ENCODE measurements at regions of chr10 and their contacts with region 1.

Region 1: GRCh38 chr10:72009411-72010081 is 45.4 kb downstream of the CHST3 start:
- DNase-seq: peak; percentile 93 to 96
- ATAC-seq: peak; percentile 84 to 91 (median 88)
- H3K4me3 ChIP-seq: peak overlapping the region; percentile 3
- H3K27ac ChIP-seq: peak overlapping the region; percentile 93
- H3K4me1 ChIP-seq: peaks cover 52% of the 10 kb centered on the region
- H3K27me3 ChIP-seq: no peaks in the 10 kb centered on the region
- CTCF ChIP-seq: no peak

Region 2: GRCh38 chr10:71963756-71964668 is 45.5 kb before region 1 on chr10 and contains the start of gene CHST3:
- intact Hi-C with region 1: loop called in 1 of 2 experiments (anchors 2 kb)
- DNase-seq: peak; percentile 79 to 92
- ATAC-seq: peak; percentile 69 to 76 (median 72)
- H3K4me3 ChIP-seq: peak within 1 kb of the TSS; percentile 84
- H3K27ac ChIP-seq: peak within 1 kb of the TSS; percentile 99
- H3K4me1 ChIP-seq: peaks cover 21% of the 10 kb centered on the region
- H3K27me3 ChIP-seq: no peaks in the 10 kb centered on the region
- CTCF ChIP-seq: no peak
- total RNA-seq, gene CHST3: 10.6 to 44.0 (median 16.6) TPM

Region 3: GRCh38 chr10:71974489-71975021 is 35.0 kb before region 1 on chr10:
- intact Hi-C with region 1: no loop called
- DNase-seq: peak; percentile 82 to 89
- ATAC-seq: peak; percentile 61 to 69 (median 66)
- H3K4me3 ChIP-seq: no peak overlapping the region
- H3K27ac ChIP-seq: peak overlapping the region; percentile 87
- H3K4me1 ChIP-seq: peaks cover 73% of the 10 kb centered on the region
- H3K27me3 ChIP-seq: no peaks in the 10 kb centered on the region
- CTCF ChIP-seq: no peak